HCT116 (cell line): ENCODE measurements at regions of chr3 and their contacts with region 1.

Region 1: DNA sequence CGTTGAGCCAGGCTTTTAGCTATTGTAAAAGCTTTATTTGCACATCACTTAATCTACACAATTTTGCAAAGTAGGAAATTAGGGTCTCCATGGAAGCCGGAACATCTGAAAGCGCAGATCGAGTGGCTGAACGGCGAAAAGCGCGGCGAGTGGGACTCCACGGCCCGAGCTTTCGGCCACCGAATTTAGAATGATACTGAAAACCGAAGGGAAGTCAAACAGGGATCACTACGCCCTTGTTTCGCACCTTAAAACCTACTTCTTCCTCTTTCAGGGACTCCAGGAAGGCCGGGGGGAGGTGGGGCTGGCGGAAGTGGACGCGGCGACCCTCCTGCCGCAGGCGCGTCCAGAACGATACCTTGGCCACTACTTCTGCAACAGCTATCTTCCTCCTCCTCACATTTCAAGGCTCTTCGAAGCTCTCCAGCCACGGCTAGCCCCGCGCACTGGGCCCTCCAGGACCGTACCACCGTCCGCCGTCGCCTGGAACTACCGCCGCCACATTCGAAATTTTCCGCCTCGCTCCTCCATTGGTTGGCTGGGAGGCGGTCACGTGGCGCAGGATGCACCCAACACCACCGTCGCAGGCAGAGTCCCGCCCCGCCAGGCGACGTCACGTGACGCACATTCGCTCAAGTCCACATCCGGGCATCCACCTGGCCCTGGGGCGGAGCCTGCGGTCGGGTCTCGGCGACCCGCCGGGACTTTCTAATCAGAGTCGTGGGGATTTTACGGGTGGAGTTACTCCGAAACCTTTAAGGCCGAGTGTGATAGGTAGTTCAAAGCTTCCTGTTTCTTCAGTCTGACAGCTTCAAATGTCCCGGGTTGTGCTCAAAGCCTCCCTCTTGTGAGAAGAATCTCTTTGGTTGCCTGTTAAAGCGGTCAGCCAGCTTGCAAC is at the start of gene SGO1:
- DNase-seq: peak; percentile 95
- ATAC-seq: peak; percentile 94
- H3K4me3 ChIP-seq: peak within 1 kb of the TSS; percentile 77 to 88
- H3K27ac ChIP-seq: peak within 1 kb of the TSS; percentile 49
- H3K4me1 ChIP-seq: peaks cover 7 to 16% of the 10 kb centered on the region in 2 experiments; a peak in 3 of 4 replicates
- H3K27me3 ChIP-seq: no peaks in the 10 kb centered on the region
- CTCF ChIP-seq: no peak
- POLR2A ChIP-seq: peak; percentile 74
- RAD21 ChIP-seq: no peak; the same call in 1 of the 2 replicates
- total RNA-seq, gene SGO1: 23.5 TPM

Region 2: DNA sequence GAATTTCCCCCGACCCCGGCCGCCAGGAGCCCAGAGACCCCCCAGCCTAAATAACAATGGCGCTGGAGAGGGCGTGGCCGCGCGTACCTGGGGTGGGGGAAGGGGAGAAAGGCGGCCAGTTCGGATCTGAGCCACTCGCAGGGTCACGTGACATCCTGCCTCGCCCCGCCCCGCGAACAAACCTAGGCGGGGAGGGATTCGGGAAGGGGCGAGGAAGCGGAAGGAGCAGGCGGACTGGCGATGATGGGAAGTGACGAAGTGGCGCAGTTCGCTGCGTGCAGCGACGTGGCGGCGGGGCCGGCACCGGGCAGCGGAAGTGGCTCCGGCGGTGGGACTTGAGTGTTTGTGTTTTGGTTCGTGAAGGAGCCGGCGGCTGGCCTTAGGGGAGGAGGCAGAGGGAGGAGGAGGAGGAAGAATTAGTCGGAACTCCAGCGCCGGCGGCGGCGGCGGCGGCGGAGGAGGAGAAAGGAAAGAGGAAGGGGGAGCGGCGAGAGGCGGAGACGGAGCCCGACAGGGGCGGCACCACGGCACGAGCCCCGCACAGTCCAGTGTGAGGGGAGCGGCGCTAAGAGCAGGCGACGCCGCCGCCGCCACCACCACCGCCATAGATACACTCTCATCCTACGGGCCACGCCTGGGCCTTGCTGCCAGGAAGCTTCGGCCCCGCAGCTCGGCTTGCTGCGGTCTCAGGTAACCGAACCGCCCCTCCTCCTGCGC is 239.0 kb before region 1 on chr3 and contains the start of gene RAB5A:
- CTCF ChIA-PET with region 1: no interaction called
- POLR2A ChIA-PET with region 1: no interaction called
- RAD21 ChIA-PET with region 1: no interaction called
- intact Hi-C with region 1: loop called (anchors 5 kb)
- DNase-seq: peak; percentile 95
- ATAC-seq: peak; percentile 90
- H3K4me3 ChIP-seq: peak within 1 kb of the TSS; percentile 89 to 93
- H3K27ac ChIP-seq: peak within 1 kb of the TSS; percentile 96
- H3K4me1 ChIP-seq: peaks cover 7 to 14% of the 10 kb centered on the region in 2 experiments; a peak in 3 of 4 replicates
- H3K27me3 ChIP-seq: no peaks in the 10 kb centered on the region
- CTCF ChIP-seq: no peak
- POLR2A ChIP-seq: no peak
- RAD21 ChIP-seq: no peak
- total RNA-seq, gene RAB5A: 45.0 TPM

Region 3: DNA sequence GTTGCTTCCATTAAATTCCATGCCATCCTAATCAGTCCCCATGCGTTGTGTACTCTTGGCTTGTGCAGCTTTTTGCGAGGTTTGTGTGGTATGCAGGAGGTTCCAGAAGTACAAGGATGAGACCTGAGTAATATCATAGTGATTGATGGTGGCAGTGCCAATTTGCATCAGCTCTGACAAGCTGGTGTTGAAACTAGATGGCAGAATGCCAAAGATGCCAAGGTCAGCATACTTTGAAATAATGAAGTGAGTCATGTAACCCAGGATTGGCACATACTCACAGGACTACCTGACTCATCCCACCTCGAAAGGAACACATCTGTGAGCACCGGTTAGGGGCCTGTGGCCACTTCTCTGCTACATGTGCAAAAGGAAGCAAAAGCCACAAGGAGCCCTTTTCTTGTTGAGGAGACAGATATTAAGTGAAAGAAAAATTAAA is 131.4 kb before region 1 on chr3:
- CTCF ChIA-PET with region 1: no interaction called
- POLR2A ChIA-PET with region 1: no interaction called
- RAD21 ChIA-PET with region 1: no interaction called
- intact Hi-C with region 1: loop called (anchors 5 kb)
- DNase-seq: peak; percentile 95
- ATAC-seq: peak; percentile 96
- H3K4me3 ChIP-seq: no peak overlapping the region
- H3K27ac ChIP-seq: no peak overlapping the region
- H3K4me1 ChIP-seq: peaks cover 15 to 20% of the 10 kb centered on the region in 2 experiments
- H3K27me3 ChIP-seq: no peaks in the 10 kb centered on the region
- CTCF ChIP-seq: no peak
- POLR2A ChIP-seq: no peak
- RAD21 ChIP-seq: no peak; the same call in 1 of the 2 replicates